ENCODE measurements at regions of chr12 and their contacts with region 1.

Region 1: GRCh38 chr12:5442251-5443006 is 10.5 kb downstream of the NTF3 start:
- DNase-seq: no peak
- H3K4me3 ChIP-seq: no peak overlapping the region
- H3K27ac ChIP-seq: no peak overlapping the region
- H3K4me1 ChIP-seq: peaks cover 0 to 9% (median 2%) of the 10 kb centered on the region in 4 donors
- H3K27me3 ChIP-seq: no peaks in the 10 kb centered on the region
- CTCF ChIP-seq: peak; percentile 39 to 64 (median 58)
- EP300 ChIP-seq: no peak
- POLR2A ChIP-seq: no peak

Region 2: DNA sequence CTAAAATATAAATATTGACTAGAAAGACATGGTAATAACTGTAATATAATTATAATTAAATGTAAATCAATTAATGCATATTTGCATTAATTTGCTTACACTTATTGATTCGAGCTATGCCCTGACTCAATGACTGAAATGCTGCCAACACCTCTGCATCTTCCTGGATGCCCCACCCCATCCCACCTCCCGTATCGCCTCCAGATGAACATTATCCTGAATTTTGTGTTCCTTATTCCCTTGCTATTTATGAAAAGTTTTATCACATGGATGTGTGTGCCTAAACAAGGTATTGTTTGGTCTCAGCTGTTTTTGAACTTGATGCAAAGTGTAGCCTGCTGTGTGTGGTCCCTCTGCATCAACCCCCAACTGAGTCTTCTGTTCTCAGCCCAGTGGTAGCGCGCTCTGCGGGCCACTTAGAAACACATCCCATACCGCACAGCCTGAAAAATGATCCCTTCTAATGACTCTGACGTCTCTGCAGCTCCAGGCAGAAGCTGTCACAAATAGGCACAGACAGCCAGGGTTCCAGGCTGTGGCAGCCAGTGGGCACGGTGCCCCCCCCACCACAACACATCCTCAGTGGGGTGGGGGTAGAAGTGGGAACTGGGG is 1854.9 kb before region 1 on chr12:
- in situ Hi-C with region 1: no loop called
- intact Hi-C with region 1: no loop called
- DNase-seq: no peak
- H3K4me3 ChIP-seq: no peak overlapping the region
- H3K27ac ChIP-seq: no peak overlapping the region
- H3K4me1 ChIP-seq: no peaks in the 10 kb centered on the region
- H3K27me3 ChIP-seq: peaks cover 5% of the 10 kb centered on the region
- CTCF ChIP-seq: no peak
- EP300 ChIP-seq: no peak
- POLR2A ChIP-seq: no peak

Region 3: DNA sequence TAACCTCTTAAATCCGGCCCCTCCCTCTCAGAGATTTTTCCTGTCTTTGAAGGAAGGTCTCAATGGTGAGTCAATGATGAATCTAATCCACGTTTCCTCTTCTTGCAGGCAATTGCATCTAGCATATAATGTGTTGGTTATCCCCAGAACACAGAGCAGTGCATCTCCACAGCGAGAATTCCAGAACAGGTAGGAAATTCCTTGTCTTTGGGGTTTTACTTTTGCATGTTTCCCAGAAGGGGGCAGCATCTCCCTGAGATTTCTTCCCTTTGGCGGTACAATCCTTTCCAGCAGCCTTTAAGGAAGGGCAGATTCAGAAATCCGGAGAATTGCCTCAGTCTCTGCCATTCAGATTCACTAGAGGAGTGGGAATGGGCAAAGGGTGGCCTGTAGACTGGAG is 270.7 kb before region 1 on chr12:
- in situ Hi-C with region 1: loop called in 2 of 4 experiments (anchors 25 kb)
- intact Hi-C with region 1: loop called (anchors 5 kb)
- DNase-seq: peak; percentile 13
- H3K4me3 ChIP-seq: no peak overlapping the region
- H3K27ac ChIP-seq: no peak overlapping the region
- H3K4me1 ChIP-seq: no peaks in the 10 kb centered on the region
- H3K27me3 ChIP-seq: no peaks in the 10 kb centered on the region
- CTCF ChIP-seq: peak; percentile 47 to 58 (median 54)
- EP300 ChIP-seq: no peak
- POLR2A ChIP-seq: no peak

Region 4: GRCh38 chr12:5184186-5184585 is 258.2 kb before region 1 on chr12:
- in situ Hi-C with region 1: loop called in 3 of 4 experiments (anchors 10 to 25 kb)
- intact Hi-C with region 1: no loop called
- DNase-seq: no peak
- H3K4me3 ChIP-seq: no peak overlapping the region
- H3K27ac ChIP-seq: no peak overlapping the region
- H3K4me1 ChIP-seq: no peaks in the 10 kb centered on the region
- H3K27me3 ChIP-seq: no peaks in the 10 kb centered on the region
- CTCF ChIP-seq: no peak
- EP300 ChIP-seq: no peak
- POLR2A ChIP-seq: no peak

Region 5: DNA sequence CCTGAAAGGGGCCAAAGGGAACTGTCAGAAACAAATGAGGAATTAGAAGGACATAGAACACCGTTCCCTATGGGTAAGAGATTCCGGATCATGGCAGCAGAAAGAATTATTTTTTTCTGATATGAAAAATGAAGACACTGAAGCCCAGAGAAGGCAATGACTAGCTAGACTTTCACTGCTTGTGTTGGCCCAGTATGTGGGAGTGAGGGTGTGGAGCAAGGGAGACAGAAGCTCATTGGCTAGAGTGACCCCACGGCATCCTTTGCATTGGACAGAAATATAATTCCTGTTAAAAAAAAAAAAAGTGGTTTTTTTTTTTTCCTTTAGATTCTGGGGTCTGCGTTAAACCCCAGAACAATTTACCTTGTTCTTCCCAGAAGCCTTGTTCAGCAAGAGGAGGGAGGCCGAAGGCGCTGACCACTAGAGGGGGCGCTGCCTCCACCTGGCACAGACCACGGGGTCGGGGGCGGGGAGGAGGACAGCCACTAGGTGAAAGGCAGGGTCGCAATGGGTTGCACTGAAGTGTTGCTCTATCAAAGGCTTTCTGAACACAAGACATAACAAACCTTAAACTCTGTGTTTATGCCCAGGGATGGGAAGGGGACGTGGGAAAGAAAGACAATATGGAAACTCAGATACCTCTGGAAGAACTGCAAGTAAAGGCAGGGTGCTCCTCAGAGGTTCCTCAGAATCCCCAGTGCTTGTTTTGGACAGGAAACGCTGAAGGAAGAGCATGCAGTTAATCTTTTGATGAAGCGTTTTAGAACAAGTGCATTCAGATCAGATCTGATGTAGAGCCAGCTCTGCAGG is 241.9 kb before region 1 on chr12:
- in situ Hi-C with region 1: loop called in 3 of 4 experiments (anchors 10 to 25 kb)
- intact Hi-C with region 1: no loop called
- DNase-seq: peak; percentile 46
- H3K4me3 ChIP-seq: no peak overlapping the region
- H3K27ac ChIP-seq: no peak overlapping the region
- H3K4me1 ChIP-seq: no peaks in the 10 kb centered on the region
- H3K27me3 ChIP-seq: no peaks in the 10 kb centered on the region
- CTCF ChIP-seq: peak; percentile 56 to 68 (median 66)
- EP300 ChIP-seq: no peak
- POLR2A ChIP-seq: no peak